ENCODE measurements at regions of chr7 and their contacts with region 1.

Region 1: DNA sequence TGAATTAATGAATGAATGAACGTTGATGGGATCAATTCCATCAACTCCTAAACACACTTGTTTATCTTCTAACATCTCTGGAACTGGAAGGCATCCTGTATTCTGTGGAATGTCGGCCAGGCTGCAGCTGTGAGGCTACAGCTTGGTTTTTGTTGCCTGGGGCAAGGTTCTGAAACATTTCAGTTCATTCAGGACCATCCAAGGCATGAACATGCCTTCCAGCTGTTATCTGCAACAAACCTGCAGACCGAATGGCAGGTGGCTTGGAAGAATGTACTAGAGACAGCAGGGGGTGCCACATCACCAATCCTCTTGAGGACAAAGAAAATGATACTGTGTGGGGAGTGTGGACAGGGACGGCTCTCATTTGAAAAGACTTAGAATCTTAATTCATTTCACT is 12.5 kb downstream of the PAPOLB start:
- DNase-seq: peak; percentile 17
- H3K4me3 ChIP-seq: no peak overlapping the region
- H3K27me3 ChIP-seq: no peaks in the 10 kb centered on the region
- CTCF ChIP-seq: peak; percentile 46

Region 2: DNA sequence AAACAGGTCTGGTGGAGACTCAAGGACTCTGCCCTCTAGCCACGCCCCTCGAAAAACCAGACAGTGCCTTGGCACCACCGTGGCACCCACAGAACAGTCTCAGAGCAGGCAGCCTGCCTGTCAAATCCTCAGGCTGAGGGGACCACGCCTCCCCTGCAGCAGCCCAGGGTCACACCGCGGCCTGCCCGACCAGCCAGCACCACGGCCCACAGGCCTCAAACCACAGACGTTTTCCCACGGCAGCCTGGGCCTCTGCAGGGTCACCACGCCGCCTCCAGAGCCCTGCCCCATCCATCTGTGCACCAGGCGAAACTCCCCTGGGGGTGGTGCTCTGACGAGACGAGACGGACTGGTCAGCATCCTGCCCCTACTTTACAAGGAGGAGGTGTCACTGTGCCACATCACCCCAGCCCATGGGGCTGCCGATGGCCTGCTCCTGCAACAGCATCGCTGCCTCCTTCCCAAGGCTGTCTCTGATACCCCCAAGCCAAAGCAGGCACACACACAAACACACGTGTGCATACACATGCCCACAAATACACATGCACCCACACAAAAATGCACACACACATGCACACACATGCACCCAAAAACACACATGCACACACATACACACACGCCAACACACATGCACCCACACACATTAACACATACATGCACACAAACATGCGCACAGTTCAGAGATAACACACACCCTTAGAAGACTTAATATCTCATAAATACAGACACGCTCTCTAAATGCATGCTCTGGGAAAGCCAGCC is 12.1 kb before region 1 on chr7:
- CTCF ChIA-PET with region 1: no interaction called
- POLR2A ChIA-PET with region 1: no interaction called
- DNase-seq: no peak
- H3K4me3 ChIP-seq: no peak overlapping the region
- H3K27me3 ChIP-seq: no peaks in the 10 kb centered on the region
- CTCF ChIP-seq: no peak

Region 3: GRCh38 chr7:4931943-4932342 is 82.6 kb after region 1 on chr7:
- CTCF ChIA-PET with region 1: no interaction called
- POLR2A ChIA-PET with region 1: no interaction called
- DNase-seq: no peak
- H3K4me3 ChIP-seq: no peak overlapping the region
- H3K27me3 ChIP-seq: no peaks in the 10 kb centered on the region
- CTCF ChIP-seq: no peak

Region 4: DNA sequence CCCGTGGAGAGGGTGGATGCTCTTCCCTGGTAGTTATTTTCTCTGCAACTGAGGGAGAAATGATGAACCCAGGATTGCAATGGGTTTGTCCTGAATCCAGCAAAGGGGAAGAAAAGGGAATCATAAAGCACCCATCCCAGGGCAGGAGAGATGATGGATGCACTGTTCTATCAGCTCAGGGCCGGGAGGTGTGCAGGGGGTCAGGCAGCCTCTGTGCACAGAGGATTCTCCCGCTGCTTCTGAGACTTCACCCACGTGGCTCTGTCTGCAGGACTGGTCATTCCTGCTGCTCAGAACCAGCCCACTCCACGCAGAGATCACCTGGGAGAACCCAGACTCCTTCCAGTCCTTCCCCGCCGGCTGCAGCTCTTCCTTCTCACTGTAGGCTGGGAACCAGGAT is 267.0 kb after region 1 on chr7:
- CTCF ChIA-PET with region 1: no interaction called
- POLR2A ChIA-PET with region 1: interaction called, 24 read pairs
- DNase-seq: no peak
- H3K4me3 ChIP-seq: no peak overlapping the region
- H3K27me3 ChIP-seq: no peaks in the 10 kb centered on the region
- CTCF ChIP-seq: no peak

Measured in BJ (cell line).